ENCODE measurements at regions of chr18 and their contacts with region 1.

Region 1: DNA sequence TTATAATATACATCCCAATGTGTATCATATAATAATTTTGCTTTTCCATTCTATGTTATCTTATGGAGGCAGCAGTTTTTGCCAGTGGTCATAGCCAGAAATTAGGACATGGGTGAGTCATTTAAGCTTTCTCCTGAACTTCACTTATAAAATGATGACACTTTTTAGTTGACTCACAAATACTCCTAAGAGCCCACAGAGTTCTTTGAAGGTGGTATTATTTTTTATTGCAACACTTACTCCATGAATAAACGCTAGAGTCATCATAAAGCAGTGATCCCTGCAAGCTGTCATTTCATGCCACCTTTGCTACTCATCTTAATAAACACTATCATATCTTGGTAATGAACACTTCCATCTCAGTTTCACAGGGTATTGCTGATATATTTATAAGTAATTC is 69.9 kb upstream of the MAPRE2 start:
- DNase-seq: no peak
- ATAC-seq: peak; percentile 55 to 84 (median 76)
- H3K4me3 ChIP-seq: no peak overlapping the region
- H3K27ac ChIP-seq: peak overlapping the region; percentile 99
- H3K4me1 ChIP-seq: peaks cover 64% of the 10 kb centered on the region
- H3K27me3 ChIP-seq: no peaks in the 10 kb centered on the region
- CTCF ChIP-seq: no peak

Region 2: DNA sequence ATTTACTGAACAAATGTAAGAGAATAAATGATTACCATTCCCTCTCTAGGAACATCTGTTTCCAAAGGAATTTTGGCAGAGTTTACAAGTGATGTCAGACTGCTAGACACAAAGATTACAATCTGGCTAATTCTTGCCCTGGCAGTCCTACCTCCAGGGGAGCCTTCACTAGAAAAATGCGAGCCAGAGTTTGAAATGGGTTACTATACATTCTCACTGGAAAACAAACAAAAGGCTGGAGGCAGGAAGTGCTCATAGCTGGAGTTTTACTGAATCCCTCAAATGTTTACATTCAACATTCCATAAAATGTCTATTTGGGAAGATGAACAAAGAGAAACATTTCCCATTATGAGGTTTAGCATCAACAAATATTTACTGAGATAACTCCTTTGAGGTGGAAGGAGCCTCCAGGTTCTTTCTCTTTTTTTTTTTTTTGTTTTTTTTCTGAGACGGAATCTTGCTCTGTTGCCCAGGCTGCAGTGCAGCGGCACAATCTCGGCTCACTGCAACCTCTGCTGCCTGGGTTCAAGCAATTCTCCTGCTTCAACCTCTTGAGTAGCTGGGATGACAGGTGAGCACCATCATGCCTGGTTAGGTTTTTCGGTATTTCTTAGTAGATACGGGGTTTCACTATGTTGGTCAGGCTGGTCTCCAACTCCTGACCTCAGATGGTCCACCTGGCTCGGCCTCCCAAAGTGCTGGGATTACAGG is 59.1 kb before region 1 on chr18:
- intact Hi-C with region 1: loop called (anchors 2 to 5 kb)
- DNase-seq: no peak
- ATAC-seq: no peak
- H3K4me3 ChIP-seq: no peak overlapping the region
- H3K27ac ChIP-seq: peak overlapping the region; percentile 91
- H3K4me1 ChIP-seq: peaks cover 45% of the 10 kb centered on the region
- H3K27me3 ChIP-seq: no peaks in the 10 kb centered on the region
- CTCF ChIP-seq: no peak

Region 3: GRCh38 chr18:34947711-34948125 is 23.6 kb before region 1 on chr18:
- intact Hi-C with region 1: loop called (anchors 2 to 5 kb)
- DNase-seq: no peak
- ATAC-seq: peak; percentile 71 to 83 (median 75)
- H3K4me3 ChIP-seq: peak overlapping the region; percentile 12
- H3K27ac ChIP-seq: peak overlapping the region; percentile 77
- H3K4me1 ChIP-seq: peaks cover 13% of the 10 kb centered on the region
- H3K27me3 ChIP-seq: no peaks in the 10 kb centered on the region
- CTCF ChIP-seq: no peak

Measured in psoas muscle (tissue), 8 donors.